CD4-positive, alpha-beta memory T cell (primary cell): ENCODE measurements at regions of chr1 and their contacts with region 1.

Region 1: DNA sequence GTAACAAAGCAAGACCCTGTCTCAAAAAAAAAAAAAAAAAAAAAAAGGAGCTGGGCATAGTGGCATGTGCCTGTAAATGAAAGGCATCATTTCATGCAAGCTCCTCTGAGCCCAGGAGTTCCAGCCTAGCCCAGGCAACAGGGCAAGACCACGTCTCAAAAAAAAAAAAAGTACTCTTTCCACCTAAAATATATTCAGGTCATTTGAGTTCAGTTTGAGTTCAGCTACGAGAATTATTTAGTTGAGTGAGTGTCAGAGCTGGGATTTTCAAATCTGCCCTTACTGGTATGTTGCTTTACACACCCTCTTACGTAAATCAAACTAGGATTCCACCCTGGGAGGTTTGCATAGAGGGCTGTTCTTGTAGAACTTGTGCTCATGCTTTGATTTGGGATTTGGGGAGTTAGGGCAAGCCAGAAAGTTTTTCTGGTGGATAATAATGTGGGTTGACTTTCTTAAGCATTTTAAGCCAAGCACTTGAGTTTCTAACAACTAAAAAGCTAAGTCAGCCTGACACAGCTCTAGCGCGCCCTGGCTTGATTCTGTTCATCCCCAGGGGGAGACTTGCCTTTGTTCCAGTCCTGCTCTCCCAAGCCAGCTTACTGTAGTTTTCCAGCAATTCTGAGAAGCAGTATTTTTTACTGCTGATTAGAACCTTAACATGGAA is 11.3 kb upstream of the PGD start:
- DNase-seq: no peak
- H3K4me3 ChIP-seq: no peak overlapping the region
- H3K4me3 Mint-ChIP-seq: no peak overlapping the region
- H3K27ac ChIP-seq: no peak overlapping the region
- H3K27ac Mint-ChIP-seq: peak overlapping the region in 1 of 7 donors; percentile 46
- H3K4me1 ChIP-seq: peaks cover 5% of the 10 kb centered on the region
- H3K4me1 Mint-ChIP-seq: peaks cover 0 to 8% (median 2%) of the 10 kb centered on the region in 4 donors
- H3K27me3 ChIP-seq: no peaks in the 10 kb centered on the region
- H3K27me3 Mint-ChIP-seq: no peaks in the 10 kb centered on the region

Region 2: DNA sequence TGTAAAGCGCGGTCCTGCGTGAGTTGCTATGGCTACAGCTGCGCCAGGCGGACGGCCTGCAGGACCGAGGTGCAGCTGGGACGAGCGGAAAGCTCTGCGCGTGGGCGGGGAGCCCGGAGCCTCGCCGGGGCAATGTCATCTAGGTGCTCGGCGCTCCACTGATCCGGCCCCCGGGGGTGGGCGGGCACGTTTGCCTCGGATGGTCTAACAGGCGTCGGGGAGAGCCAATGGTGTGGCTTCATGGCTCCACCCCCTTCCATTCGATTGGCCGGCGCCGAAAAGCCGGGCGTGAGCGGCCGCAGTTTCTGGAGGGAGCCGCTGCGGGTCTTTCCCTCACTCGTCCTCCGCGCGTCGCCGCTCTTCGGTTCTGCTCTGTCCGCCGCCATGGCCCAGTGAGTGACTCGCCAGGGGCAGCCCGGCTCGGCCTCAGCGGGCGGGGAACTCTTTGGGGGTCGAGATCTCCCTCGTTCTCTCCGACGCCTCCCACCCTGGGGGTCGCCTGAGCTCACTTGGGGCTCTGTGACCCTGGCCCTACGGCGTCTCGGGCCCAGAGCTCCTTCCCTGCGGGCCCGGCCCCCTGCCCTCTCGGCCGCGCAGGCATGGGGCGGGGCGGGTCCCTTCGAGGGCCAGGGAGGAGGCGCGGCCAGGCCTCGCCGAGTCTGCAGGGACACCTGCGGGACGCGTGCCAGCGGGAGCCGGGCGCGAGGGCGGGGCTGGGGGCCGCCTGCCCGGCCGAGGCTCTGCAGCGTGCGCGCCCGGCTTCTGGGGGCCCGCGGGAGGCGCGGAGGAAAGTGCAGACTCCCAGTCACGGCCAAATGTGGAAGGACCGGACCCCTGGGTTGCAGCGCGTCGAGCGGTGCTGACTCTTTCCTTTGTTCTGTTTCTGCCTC is 11.4 kb after region 1 on chr1 and contains the start of gene PGD:
- CTCF ChIA-PET with region 1: interaction called, 8 read pairs
- POLR2A ChIA-PET with region 1: interaction called, 7 read pairs
- intact Hi-C with region 1: loop called (anchors 1 kb)
- DNase-seq: peak; percentile 94 to 98 (median 95)
- H3K4me3 ChIP-seq: peak within 1 kb of the TSS; percentile 81 to 94
- H3K4me3 Mint-ChIP-seq: peak within 1 kb of the TSS; percentile 93 to 97 (median 95)
- H3K27ac ChIP-seq: peak within 1 kb of the TSS; percentile 76
- H3K27ac Mint-ChIP-seq: peak within 1 kb of the TSS; percentile 81 to 93 (median 86)
- H3K4me1 ChIP-seq: peaks cover 20% of the 10 kb centered on the region
- H3K4me1 Mint-ChIP-seq: peaks cover 8 to 24% (median 18%) of the 10 kb centered on the region in 4 donors
- H3K27me3 ChIP-seq: no peaks in the 10 kb centered on the region
- H3K27me3 Mint-ChIP-seq: no peaks in the 10 kb centered on the region
- total RNA-seq, gene PGD: 32.8 to 37.0 TPM